GM12878 (cell line): ENCODE measurements at regions of chr16 and their contacts with region 1.

Region 1: GRCh38 chr16:56356276-56357240 is 68.8 kb downstream of the AMFR start:
- DNase-seq: peak; percentile 46
- ATAC-seq: peak; percentile 98
- H3K4me3 ChIP-seq: peak overlapping the region; percentile 61
- H3K27ac ChIP-seq: peak overlapping the region; percentile 35
- H3K4me1 ChIP-seq: peaks cover 12% of the 10 kb centered on the region
- H3K27me3 ChIP-seq: no peaks in the 10 kb centered on the region
- CTCF ChIP-seq: peak; percentile 81 to 96 (median 87)
- EP300 ChIP-seq: 0 out of 4 replicates have a peak, but pooled peaks of 1 of the 2 experiments have one; percentile 1
- POLR2A ChIP-seq: no peak
- RAD21 ChIP-seq: peak; percentile 52

Region 2: DNA sequence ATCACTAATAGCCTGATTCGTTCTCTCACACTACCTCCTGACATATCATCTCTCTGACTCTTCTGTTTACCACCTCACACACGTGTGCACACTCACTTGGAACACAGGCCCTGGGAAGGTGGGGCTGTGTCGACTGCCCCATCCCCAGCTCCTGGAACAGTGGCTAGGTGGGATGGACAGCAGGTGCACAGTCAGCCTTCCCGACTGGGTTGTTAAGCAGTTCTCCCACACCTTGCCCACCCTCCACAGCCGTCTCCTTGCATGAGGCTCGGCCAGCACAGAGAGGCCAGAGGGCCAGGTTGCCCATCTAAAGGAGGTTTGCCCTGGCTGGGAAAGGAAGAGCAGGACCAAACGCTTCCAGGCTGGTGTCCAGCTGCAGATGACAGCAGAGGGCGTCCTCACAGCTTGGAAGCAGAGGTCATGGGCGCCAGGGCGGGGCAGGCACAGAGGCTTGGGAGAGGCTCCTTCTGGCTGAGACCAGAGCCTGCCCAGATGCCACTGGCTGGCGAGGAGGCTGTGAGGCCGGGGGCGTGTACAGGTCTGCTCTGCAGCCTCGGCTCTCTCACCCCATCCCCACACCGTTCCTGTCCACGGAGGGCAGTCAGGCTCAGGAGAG is 24.0 kb before region 1 on chr16:
- CTCF ChIA-PET with region 1: interaction called, 18 read pairs
- POLR2A ChIA-PET with region 1: no interaction called
- RAD21 ChIA-PET with region 1: interaction called, 4 read pairs
- SMC1A ChIA-PET with region 1: interaction called, 7 read pairs
- in situ Hi-C with region 1: no loop called
- intact Hi-C with region 1: no loop called
- DNase-seq: no peak
- ATAC-seq: peak; percentile 78
- H3K4me3 ChIP-seq: no peak overlapping the region
- H3K27ac ChIP-seq: no peak overlapping the region
- H3K4me1 ChIP-seq: no peaks in the 10 kb centered on the region
- H3K27me3 ChIP-seq: no peaks in the 10 kb centered on the region; a peak in 1 of 4 replicates
- CTCF ChIP-seq: peak in 2 of 3 experiments; percentile 20 to 29; a peak in 2 of 6 replicates
- EP300 ChIP-seq: no peak
- POLR2A ChIP-seq: no peak
- RAD21 ChIP-seq: peak; percentile 39; the same call in 1 of the 2 replicates

Region 3: GRCh38 chr16:56370877-56371659 is 14.5 kb after region 1 on chr16:
- CTCF ChIA-PET with region 1: interaction called, 32 read pairs
- POLR2A ChIA-PET with region 1: no interaction called
- RAD21 ChIA-PET with region 1: no interaction called
- SMC1A ChIA-PET with region 1: no interaction called
- in situ Hi-C with region 1: no loop called
- intact Hi-C with region 1: no loop called
- DNase-seq: no peak
- ATAC-seq: no peak
- H3K4me3 ChIP-seq: no peak overlapping the region
- H3K27ac ChIP-seq: no peak overlapping the region
- H3K4me1 ChIP-seq: no peaks in the 10 kb centered on the region
- H3K27me3 ChIP-seq: no peaks in the 10 kb centered on the region
- CTCF ChIP-seq: no peak
- EP300 ChIP-seq: no peak
- POLR2A ChIP-seq: no peak
- RAD21 ChIP-seq: no peak

Region 4: DNA sequence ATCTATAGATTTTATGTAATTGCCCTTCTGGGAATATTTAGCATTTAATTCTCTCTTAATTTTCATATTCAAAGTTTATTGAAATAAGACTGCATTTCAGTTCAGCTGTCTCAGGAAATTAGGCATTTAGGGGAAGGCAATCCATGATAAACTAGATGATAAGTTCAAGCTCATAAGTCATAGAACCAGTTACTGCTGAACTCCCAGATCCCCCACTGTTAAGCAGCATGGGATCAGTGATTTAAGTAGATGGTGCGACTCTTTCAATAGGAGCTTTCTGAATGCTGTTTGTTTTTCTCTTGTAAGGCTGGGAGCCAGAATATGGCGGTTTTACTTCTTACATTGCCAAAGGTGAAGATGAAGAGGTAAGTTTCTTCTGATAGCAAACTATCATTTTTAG is 118.6 kb after region 1 on chr16:
- CTCF ChIA-PET with region 1: no interaction called
- POLR2A ChIA-PET with region 1: no interaction called
- RAD21 ChIA-PET with region 1: no interaction called
- SMC1A ChIA-PET with region 1: no interaction called
- in situ Hi-C with region 1: no loop called
- intact Hi-C with region 1: no loop called
- DNase-seq: no peak
- ATAC-seq: no peak
- H3K4me3 ChIP-seq: no peak overlapping the region
- H3K27ac ChIP-seq: no peak overlapping the region
- H3K4me1 ChIP-seq: no peaks in the 10 kb centered on the region
- H3K27me3 ChIP-seq: no peaks in the 10 kb centered on the region
- CTCF ChIP-seq: no peak
- EP300 ChIP-seq: no peak
- POLR2A ChIP-seq: no peak
- RAD21 ChIP-seq: no peak